ENCODE measurements at regions of chr21 and their contacts with region 1.

Region 1: GRCh38 chr21:25801217-25802014 is 66.6 kb downstream of the GABPA start:
- DNase-seq: peak; percentile 88
- H3K4me3 Mint-ChIP-seq: no peak overlapping the region
- H3K27ac Mint-ChIP-seq: no peak overlapping the region
- H3K4me1 Mint-ChIP-seq: peaks cover 6% of the 10 kb centered on the region
- H3K27me3 Mint-ChIP-seq: no peaks in the 10 kb centered on the region
- CTCF ChIP-seq: peak; percentile 90

Region 2: DNA sequence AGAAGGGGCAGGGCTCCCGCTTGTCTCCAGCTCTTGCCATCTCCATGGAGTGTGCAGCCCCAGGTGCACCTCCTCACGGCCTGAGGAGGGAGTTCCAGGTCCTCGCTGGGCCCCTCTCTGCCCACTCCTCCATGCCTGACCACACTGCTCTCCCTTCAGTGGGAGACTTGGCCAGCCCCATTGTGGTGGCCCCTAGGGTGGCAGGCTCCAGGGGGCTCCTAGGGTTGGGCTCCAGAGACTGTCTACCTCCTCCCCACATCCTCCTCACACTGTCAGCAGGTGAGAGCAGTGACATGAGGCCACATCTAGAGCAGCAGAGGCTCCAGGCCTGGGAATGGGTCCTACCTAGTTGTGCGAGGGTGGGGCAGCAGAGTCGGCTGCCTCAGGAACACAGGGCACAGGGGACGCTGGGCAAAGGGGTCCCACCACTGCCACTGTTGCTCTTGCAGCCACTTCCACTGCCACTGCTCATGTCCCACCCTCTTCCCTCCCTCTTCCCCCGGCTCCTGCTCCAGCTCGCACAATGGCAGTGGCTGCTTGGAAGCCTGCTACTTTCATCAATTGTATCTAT is 708.9 kb before region 1 on chr21:
- CTCF ChIA-PET with region 1: no interaction called
- POLR2A ChIA-PET with region 1: no interaction called
- intact Hi-C with region 1: no loop called
- DNase-seq: no peak
- H3K4me3 Mint-ChIP-seq: no peak overlapping the region
- H3K27ac Mint-ChIP-seq: no peak overlapping the region
- H3K4me1 Mint-ChIP-seq: no peaks in the 10 kb centered on the region
- H3K27me3 Mint-ChIP-seq: no peaks in the 10 kb centered on the region
- CTCF ChIP-seq: no peak

Region 3: GRCh38 chr21:25589887-25590286 is 211.5 kb before region 1 on chr21:
- CTCF ChIA-PET with region 1: no interaction called
- POLR2A ChIA-PET with region 1: no interaction called
- intact Hi-C with region 1: no loop called
- DNase-seq: no peak
- H3K4me3 Mint-ChIP-seq: no peak overlapping the region
- H3K27ac Mint-ChIP-seq: no peak overlapping the region
- H3K4me1 Mint-ChIP-seq: no peaks in the 10 kb centered on the region
- H3K27me3 Mint-ChIP-seq: no peaks in the 10 kb centered on the region
- CTCF ChIP-seq: no peak

Region 4: DNA sequence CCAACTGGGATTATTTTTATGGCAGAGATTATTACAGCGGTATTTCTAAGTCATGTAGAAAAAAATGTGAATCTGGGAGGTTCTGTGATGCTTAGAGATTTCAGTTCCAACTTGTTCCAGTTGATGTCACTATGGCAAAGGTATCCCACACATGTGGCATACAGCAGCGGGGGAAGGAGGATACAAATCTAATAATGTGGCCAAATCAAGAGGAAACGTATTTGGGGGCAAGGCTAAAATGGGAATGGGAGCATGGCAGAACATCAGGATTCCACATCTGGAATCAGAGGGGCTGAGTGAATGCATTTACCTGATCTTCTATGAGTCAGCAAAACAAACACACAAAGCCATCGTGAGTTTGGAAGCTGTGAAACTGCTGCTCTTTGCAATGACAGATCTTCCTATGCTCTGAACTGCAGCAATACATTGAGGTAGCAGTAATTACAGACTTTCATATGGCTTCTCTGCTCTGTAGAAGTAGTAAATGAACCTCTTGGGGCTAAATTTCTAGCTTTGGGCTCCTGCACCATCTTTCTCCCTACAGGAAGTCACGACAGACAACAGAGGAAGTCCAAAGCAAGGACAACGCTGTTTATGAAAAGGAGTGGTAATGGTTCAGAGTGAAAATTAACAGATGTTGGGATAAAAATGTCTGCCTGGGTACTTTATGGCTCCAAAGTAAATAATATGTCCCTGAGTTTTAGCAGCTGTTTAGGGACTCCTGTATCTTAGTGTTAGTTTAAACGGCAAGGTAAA is 11.1 kb before region 1 on chr21:
- CTCF ChIA-PET with region 1: interaction called, 17 read pairs
- POLR2A ChIA-PET with region 1: no interaction called
- intact Hi-C with region 1: no loop called
- DNase-seq: peak; percentile 49
- H3K4me3 Mint-ChIP-seq: peak overlapping the region; percentile 64
- H3K27ac Mint-ChIP-seq: no peak overlapping the region
- H3K4me1 Mint-ChIP-seq: peaks cover 6% of the 10 kb centered on the region
- H3K27me3 Mint-ChIP-seq: peaks cover 24% of the 10 kb centered on the region
- CTCF ChIP-seq: peak; percentile 44

Measured in MCF 10A (cell line).